ENCODE measurements at regions of chr9 and their contacts with region 1.

Region 1: DNA sequence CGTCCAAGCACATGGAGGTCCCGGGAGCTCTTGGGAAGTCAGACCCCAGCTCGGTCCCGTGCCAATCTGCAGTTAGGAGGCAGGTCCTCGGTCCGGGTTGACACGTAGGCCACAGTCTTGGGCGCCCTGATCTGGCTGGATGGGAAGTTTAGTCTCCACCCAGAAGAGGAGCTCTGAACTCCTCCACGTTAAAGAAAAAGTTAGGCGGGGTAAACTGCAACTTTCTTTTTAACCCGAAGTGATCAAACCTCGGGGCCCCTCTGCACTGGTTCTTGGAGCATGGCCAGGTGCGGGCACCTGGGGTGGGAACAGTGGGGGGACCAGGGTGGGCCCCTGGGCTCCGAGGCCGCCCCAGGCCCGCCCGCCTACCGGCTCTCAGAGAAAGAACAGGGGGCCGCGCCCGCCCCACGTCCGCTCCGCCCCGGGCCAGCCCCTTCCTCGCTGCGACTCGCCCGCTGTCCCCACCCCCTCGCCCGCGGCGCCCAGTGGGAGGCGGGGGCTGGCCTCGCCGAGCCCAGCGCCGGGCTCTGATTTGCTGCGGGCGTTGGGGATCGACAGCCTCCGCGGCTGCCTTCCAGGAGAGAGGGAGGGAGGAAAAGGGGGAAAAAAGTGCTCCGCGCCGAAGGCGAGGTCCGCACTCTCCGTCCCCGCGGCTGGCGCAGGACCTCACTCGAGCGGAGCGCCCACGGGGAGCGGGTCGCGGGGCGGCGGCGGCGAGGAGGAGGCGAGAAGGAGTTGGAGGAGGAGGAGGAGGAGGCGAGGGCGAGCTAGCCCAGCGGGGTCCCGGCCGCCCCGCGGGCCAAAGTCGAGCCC is at the start of gene COL5A1:
- DNase-seq: peak; percentile 97
- H3K4me3 ChIP-seq: peak within 1 kb of the TSS; percentile 66 to 90 (median 78)
- H3K27ac ChIP-seq: peak within 1 kb of the TSS; percentile 95 to 98 (median 97)
- H3K4me1 ChIP-seq: peaks cover 0 to 36% (median 31%) of the 10 kb centered on the region in 4 donors
- H3K27me3 ChIP-seq: no peaks in the 10 kb centered on the region
- CTCF ChIP-seq: peak in 3 of 4 experiments; percentile 24 to 44 (median 34)
- EP300 ChIP-seq: no peak
- POLR2A ChIP-seq: peak; percentile 72 to 90
- total RNA-seq, gene COL5A1: 24.2 to 168 (median 59.4) TPM

Region 2: DNA sequence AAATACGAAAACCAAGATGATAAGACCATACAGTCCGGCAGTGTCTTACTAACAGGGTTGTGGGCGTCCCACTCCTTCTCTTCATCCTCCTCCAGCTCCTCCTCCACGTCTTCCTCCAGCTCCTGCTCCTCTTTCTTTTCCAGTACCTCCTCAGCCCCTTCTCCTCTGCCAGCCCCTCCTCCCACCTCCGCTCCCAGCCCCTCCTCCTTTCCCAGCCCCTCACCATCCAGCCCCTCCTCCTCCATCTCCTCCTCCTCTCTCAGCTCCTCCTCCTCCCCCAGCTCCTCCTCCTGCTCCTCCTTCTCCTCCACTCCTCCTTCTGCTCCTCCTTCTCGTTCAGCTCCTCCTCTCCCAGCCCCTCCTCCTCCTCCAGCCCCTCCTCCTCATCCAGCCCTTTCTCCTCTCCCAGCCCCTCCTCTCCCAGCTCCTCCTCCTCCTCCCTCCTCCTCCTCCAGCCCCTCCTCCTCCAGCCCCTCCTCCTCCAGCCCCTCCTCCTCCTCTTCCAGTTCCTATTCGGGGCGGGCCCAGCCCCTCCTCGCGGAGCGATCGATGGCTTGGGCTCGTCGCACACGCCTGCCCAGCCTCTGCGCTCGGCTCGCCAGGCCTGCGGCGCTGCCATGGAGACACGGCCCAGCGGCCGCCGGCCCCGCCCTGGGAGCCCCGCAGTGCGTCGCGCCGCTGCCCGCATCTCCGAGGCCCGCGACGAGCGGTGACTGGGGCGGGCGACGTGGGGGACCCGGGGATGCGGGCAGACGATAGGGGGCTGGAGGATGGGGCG is 616.4 kb before region 1 on chr9 and contains the start of gene BRD3OS:
- intact Hi-C with region 1: loop called (anchors 10 kb)
- DNase-seq: peak; percentile 99
- H3K4me3 ChIP-seq: peak within 1 kb of the TSS; percentile 66 to 95 (median 84)
- H3K27ac ChIP-seq: peak within 1 kb of the TSS; percentile 76 to 82 (median 82)
- H3K4me1 ChIP-seq: peaks cover 0 to 20% (median 11%) of the 10 kb centered on the region in 4 donors
- H3K27me3 ChIP-seq: no peaks in the 10 kb centered on the region
- CTCF ChIP-seq: no peak
- EP300 ChIP-seq: no peak
- POLR2A ChIP-seq: no peak
- total RNA-seq, gene BRD3OS: 11.7 to 19.4 (median 12.7) TPM

Region 3: GRCh38 chr9:134163353-134164196 is 477.8 kb before region 1 on chr9:
- intact Hi-C with region 1: loop called (anchors 2 kb)
- DNase-seq: peak; percentile 88
- H3K4me3 ChIP-seq: no peak overlapping the region
- H3K27ac ChIP-seq: no peak overlapping the region
- H3K4me1 ChIP-seq: peaks cover 0 to 31% (median 13%) of the 10 kb centered on the region in 4 donors
- H3K27me3 ChIP-seq: no peaks in the 10 kb centered on the region
- CTCF ChIP-seq: peak; percentile 59 to 82 (median 78)
- EP300 ChIP-seq: no peak
- POLR2A ChIP-seq: no peak

Region 4: DNA sequence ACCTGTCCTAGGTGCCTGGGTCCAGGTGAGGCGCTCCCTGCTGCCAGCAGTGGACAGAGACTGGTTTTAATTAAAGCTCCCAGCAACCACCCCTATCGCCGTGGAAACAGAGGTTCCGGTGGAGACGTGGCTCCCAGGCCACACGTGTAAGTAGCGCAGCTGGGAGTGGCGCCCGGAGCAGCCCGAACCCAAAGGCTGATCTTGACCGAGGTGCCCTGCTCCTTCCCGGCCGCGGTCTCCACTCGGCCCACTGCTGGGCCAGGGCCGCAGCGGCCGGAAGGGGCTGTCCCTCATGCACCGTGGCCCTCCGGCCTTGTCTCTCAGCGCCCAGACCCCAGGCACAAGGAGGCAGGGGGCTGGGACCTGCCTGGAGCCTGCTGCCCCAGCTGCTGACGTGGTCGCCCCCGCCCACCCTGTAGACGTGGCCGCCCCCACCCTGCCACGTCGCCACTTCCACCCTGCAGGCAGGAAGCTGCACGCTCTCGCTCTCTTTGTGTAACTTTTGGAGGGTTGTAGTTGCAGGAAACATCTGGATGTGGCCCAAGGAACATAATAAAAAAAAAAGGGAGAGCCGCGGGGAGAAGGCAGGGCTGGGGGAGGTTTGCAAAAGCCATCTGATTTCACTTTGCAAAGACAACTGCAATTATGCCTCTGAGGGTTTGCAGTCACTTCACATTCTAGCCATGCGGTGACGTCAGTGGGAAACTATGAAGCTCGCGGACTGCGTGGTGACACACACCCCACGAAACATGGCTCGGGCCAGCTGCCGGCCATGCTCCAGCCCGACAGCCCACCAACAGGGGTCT is 185.2 kb before region 1 on chr9:
- intact Hi-C with region 1: loop called (anchors 2 kb)
- DNase-seq: peak; percentile 96
- H3K4me3 ChIP-seq: peak overlapping the region; percentile 3 to 43 (median 37)
- H3K27ac ChIP-seq: peak overlapping the region; percentile 77 to 89 (median 87)
- H3K4me1 ChIP-seq: peaks cover 4 to 44% (median 35%) of the 10 kb centered on the region in 4 donors
- H3K27me3 ChIP-seq: no peaks in the 10 kb centered on the region
- CTCF ChIP-seq: no peak
- EP300 ChIP-seq: peak in 2 of 4 donors; percentile 51 to 54
- POLR2A ChIP-seq: no peak

Region 5: DNA sequence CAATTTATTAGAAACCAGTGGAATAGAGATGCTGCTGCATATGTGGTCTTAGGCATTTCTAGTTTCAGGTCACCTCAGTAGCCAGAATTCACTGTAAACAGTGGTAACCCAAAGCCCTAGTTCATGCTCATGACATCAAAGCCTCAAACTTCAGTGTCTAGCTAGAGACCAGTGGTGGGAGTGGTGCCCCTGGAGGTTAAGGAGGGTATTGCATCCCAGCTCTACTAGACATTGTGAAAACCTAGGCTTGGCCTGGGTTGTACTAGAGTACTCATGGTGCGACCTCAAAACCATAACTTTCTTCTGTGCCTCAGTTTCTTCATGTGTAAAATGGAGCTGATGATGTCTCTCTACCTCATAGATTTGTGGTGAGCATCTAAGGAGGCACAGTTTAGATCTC is 19.0 kb after region 1 on chr9:
- intact Hi-C with region 1: loop called (anchors 1 kb)
- DNase-seq: peak; percentile 53
- H3K4me3 ChIP-seq: no peak overlapping the region
- H3K27ac ChIP-seq: peak overlapping the region; percentile 79 to 92 (median 90)
- H3K4me1 ChIP-seq: peaks cover 0 to 93% (median 88%) of the 10 kb centered on the region in 4 donors
- H3K27me3 ChIP-seq: no peaks in the 10 kb centered on the region
- CTCF ChIP-seq: peak in 3 of 4 experiments; percentile 26 to 61 (median 42)
- EP300 ChIP-seq: no peak
- POLR2A ChIP-seq: no peak

Region 6: GRCh38 chr9:134738869-134739659 is 97.7 kb after region 1 on chr9:
- intact Hi-C with region 1: loop called (anchors 5 kb)
- DNase-seq: peak; percentile 91
- H3K4me3 ChIP-seq: no peak overlapping the region
- H3K27ac ChIP-seq: peak overlapping the region in 3 of 4 donors; percentile 26 to 93 (median 34)
- H3K4me1 ChIP-seq: peaks cover 0 to 43% (median 26%) of the 10 kb centered on the region in 4 donors
- H3K27me3 ChIP-seq: no peaks in the 10 kb centered on the region
- CTCF ChIP-seq: peak; percentile 90 to 98 (median 94)
- EP300 ChIP-seq: no peak
- POLR2A ChIP-seq: no peak